ENCODE measurements at regions of chr17 and their contacts with region 1.

Region 1: GRCh38 chr17:70375406-70375805 is 206.1 kb downstream of the KCNJ2 start:
- DNase-seq: no peak
- H3K4me3 ChIP-seq: no peak overlapping the region
- H3K27ac ChIP-seq: no peak overlapping the region
- H3K4me1 ChIP-seq: no peaks in the 10 kb centered on the region
- H3K27me3 ChIP-seq: no peaks in the 10 kb centered on the region
- CTCF ChIP-seq: no peak
- POLR2A ChIP-seq: no peak

Region 2: DNA sequence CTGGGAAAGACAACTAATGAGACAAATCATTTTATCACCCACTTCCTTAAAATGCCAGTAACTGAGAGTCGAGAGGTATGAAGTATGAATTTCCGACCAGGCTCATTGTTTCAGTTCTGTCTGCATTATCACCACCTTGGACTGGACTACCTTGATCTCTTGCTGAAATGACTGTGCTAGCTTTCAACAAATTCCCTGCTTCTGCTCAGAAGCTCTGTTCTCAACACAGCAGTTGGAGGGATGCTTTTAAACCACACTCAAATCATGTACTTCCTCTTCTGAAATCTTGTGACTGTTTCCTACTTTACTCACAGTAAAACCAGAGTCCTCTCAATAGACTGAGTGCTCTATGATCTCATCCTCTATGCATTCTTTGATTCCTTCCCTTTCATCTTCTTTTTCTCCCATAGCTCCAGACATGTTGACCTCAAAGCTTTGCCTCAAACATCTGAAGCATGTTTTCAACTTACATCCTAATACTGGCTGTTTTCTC is 10.3 kb before region 1 on chr17:
- CTCF ChIA-PET with region 1: interaction called, 6 read pairs
- POLR2A ChIA-PET with region 1: interaction called, 13 read pairs
- dilution Hi-C with region 1: no loop called
- intact Hi-C with region 1: no loop called
- DNase-seq: peak; percentile 10
- H3K4me3 ChIP-seq: no peak overlapping the region
- H3K27ac ChIP-seq: no peak overlapping the region
- H3K4me1 ChIP-seq: no peaks in the 10 kb centered on the region
- H3K27me3 ChIP-seq: no peaks in the 10 kb centered on the region
- CTCF ChIP-seq: no peak
- POLR2A ChIP-seq: no peak

Region 3: DNA sequence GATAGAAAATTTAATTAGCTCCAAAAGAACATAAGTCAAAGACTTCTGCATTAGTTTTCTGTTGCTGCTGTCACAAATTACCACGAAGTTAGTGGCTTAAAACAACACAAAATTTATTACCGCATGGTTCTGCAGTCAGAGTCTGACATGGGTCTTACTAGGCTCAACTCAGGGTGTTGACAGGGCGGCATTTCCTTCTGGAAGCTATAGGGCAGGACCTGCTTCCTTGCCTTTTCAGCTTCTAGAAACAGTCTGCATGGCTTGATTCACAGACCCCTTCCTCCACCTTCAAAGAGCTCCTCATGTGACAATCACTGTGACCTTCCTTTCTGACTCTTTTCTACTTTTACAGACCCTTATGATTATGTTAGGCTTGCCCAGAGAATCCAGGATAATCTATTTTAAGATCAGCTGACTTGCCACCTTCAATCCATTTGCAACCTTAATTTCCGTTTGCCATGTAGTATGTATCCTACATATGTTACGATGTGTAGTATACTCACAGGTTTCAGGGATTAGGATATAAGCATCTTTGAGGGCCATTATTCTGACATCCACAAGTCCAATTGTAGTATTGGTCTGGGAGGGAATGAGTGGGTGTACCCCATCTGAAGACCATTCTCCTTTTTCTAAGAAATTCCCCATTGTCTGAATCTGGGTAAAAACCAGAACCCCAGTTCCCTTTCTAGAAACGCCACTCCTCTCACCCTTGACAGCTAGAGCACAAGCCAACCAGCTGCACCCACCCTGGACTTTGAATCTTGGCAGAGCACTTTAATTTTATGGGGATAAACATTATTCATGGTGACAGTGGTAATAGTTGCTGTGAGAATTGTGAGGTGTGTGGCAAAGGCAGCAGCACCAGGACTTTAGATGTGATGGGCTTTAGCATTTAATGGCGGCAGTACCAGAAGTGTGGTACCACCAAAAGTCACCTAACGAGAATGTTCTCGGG is 59.4 kb after region 1 on chr17:
- CTCF ChIA-PET with region 1: no interaction called
- POLR2A ChIA-PET with region 1: no interaction called
- dilution Hi-C with region 1: no loop called
- intact Hi-C with region 1: loop called (anchors 5 kb)
- DNase-seq: peak; percentile 63
- H3K4me3 ChIP-seq: no peak overlapping the region
- H3K27ac ChIP-seq: no peak overlapping the region
- H3K4me1 ChIP-seq: no peaks in the 10 kb centered on the region
- H3K27me3 ChIP-seq: no peaks in the 10 kb centered on the region
- CTCF ChIP-seq: no peak
- POLR2A ChIP-seq: no peak

Measured in endothelial cell of umbilical vein (primary cell).